Activated B cell treated with CpG ODN at 0.5 μM for 24 hours (primary cell): ENCODE measurements at regions of chr19 and their contacts with region 1.

Region 1: GRCh38 chr19:2274931-2275535 is 6.9 kb downstream of the PEAK3 start:
- DNase-seq: no peak
- ATAC-seq: no peak
- H3K4me3 Mint-ChIP-seq: peak overlapping the region; percentile 28
- H3K27ac Mint-ChIP-seq: peak overlapping the region; percentile 66
- H3K4me1 Mint-ChIP-seq: peaks cover 52% of the 10 kb centered on the region
- H3K27me3 Mint-ChIP-seq: no peaks in the 10 kb centered on the region
- CTCF ChIP-seq: no peak

Region 2: DNA sequence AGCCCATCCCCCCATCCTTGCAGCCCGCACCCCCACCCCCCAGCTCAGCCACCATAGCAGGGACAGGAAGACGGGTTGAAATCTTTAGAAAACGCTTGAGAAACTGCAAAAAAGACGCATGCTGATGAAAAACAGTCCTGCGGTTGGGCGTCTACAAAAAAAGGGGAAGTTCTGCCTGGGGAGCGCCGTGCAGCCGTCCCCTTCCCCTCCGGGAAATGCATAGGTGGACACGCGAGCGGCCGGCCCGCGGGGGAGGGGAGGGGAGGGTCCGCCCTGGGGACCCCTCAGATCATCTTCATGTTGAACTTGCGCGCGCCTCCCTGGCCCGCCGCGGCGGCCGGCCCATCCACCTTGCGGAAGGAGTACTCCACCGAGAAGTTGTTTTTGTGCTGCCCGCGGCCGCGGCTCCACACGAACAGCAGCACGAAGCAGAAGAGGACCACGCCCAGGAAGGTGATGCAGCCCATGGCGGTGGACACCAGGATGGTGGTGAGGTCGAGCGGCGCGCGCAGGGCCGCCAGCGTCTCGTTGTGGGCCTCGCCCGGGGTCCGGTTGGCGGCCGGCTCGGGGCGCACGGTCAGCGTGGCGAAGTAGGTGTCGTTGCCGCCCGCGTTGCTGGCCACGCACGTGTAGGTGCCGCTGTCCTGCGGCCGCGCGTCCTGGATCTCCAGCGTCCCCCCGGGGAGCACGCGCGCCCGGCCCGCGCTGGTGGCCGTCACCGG is 14.8 kb after region 1 on chr19:
- CTCF ChIA-PET with region 1: interaction called, 13 read pairs
- POLR2A ChIA-PET with region 1: interaction called, 73 read pairs
- intact Hi-C with region 1: loop called (anchors 1 kb)
- DNase-seq: peak; percentile 69
- ATAC-seq: peak; percentile 69
- H3K4me3 Mint-ChIP-seq: peak overlapping the region; percentile 90
- H3K27ac Mint-ChIP-seq: peak overlapping the region; percentile 90
- H3K4me1 Mint-ChIP-seq: peaks cover 54% of the 10 kb centered on the region
- H3K27me3 Mint-ChIP-seq: no peaks in the 10 kb centered on the region
- CTCF ChIP-seq: no peak

Region 3: DNA sequence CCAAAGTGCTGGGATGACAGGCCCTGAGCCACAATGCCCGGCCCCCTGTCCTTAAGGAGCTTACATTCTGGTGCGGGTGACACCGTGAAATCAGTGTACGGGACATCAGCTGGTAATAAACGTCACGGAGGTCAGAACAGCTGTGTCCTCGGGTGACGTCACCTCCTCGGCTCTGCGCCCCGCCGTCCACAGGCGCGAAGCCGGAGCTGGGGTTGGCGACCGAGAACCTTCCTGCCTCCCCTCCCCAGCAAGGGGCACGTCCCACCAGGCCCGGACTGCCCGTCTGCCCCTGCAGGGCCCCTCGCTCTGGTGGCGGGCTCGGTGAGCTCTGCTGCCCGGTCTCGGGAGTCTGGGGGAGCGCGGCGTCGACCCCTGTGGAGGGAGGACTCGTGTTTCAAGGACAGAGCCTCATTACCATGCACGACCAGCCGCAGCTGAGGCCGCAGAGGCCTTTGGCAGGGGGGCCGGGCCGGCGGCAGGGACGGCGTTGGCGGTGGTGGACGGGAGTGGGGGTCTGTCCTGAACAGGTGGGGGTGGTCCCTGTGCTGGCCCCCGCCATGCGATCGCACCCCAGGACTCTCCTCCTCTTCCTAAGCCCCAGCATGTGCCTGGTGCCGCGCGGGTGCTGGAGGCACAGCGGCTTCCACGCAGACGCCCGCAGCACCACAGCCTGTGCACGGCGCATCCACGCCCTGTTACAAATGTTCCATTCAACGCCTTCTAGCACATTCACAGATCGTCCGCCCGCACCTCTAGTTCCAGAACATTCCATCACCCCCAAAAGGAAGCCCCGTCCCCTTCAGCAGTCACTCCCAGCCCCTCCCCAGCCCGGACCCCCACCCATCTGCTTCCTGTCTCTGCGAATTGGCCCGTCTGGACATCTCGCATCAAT is 27.5 kb after region 1 on chr19:
- CTCF ChIA-PET with region 1: interaction called, 3 read pairs
- POLR2A ChIA-PET with region 1: interaction called, 11 read pairs
- intact Hi-C with region 1: no loop called
- DNase-seq: peak; percentile 44
- ATAC-seq: peak; percentile 60
- H3K4me3 Mint-ChIP-seq: peak overlapping the region; percentile 81
- H3K27ac Mint-ChIP-seq: peak overlapping the region; percentile 54
- H3K4me1 Mint-ChIP-seq: peaks cover 49% of the 10 kb centered on the region
- H3K27me3 Mint-ChIP-seq: peaks cover 3% of the 10 kb centered on the region
- CTCF ChIP-seq: no peak

Region 4: GRCh38 chr19:2636897-2637683 is 362.1 kb after region 1 on chr19:
- CTCF ChIA-PET with region 1: interaction called, 3 read pairs
- POLR2A ChIA-PET with region 1: no interaction called
- intact Hi-C with region 1: loop called (anchors 1 kb)
- DNase-seq: peak; percentile 74
- ATAC-seq: peak; percentile 52
- H3K4me3 Mint-ChIP-seq: peak overlapping the region; percentile 53
- H3K27ac Mint-ChIP-seq: peak overlapping the region; percentile 74
- H3K4me1 Mint-ChIP-seq: peaks cover 87% of the 10 kb centered on the region
- H3K27me3 Mint-ChIP-seq: no peaks in the 10 kb centered on the region
- CTCF ChIP-seq: peak; percentile 31